ENCODE measurements at regions of chr4 and their contacts with region 1.

Region 1: GRCh38 chr4:112031712-112032328 is 113.4 kb upstream of the FAM241A start:
- DNase-seq: no peak
- ATAC-seq: peak; percentile 67 to 72
- H3K4me3 ChIP-seq: no peak overlapping the region
- H3K27ac ChIP-seq: no peak overlapping the region
- H3K4me1 ChIP-seq: no peaks in the 10 kb centered on the region
- H3K27me3 ChIP-seq: no peaks in the 10 kb centered on the region

Region 2: DNA sequence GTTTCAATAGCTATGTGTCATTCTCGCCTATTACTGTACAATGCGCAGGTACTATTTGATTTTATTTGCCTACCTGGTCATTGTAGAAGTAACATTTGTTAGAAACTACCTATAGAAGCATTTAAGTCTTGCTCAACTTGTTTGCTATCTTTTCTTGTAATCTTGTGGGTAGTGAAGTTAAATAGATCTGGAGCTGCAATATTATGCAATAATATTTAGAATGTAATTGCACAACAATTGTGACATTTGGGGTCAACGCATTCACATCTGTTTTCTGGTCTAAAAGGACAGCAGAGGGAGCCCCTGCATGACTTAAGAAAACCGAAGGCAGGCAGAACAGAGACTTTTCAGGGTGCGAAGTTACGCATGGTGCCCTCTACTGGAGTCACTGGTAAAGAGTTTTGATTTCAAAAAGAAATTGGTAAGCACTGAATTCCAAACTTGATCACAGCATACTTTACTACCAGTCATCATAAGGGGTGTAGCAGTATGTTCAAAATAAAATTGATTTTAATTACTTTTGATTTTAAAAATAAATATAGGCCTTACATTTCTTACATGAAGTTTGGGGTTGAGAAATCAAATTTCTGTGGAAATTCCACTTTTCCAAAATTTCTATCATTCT is 389.8 kb before region 1 on chr4:
- intact Hi-C with region 1: loop called (anchors 5 to 10 kb)
- DNase-seq: peak; percentile 39 to 45 (median 44)
- ATAC-seq: peak; percentile 85
- H3K4me3 ChIP-seq: no peak overlapping the region
- H3K27ac ChIP-seq: no peak overlapping the region
- H3K4me1 ChIP-seq: no peaks in the 10 kb centered on the region
- H3K27me3 ChIP-seq: no peaks in the 10 kb centered on the region

Region 3: GRCh38 chr4:111798840-111799239 is 233.0 kb before region 1 on chr4:
- intact Hi-C with region 1: no loop called
- DNase-seq: no peak
- ATAC-seq: no peak
- H3K4me3 ChIP-seq: no peak overlapping the region
- H3K27ac ChIP-seq: no peak overlapping the region
- H3K4me1 ChIP-seq: no peaks in the 10 kb centered on the region
- H3K27me3 ChIP-seq: no peaks in the 10 kb centered on the region

Region 4: DNA sequence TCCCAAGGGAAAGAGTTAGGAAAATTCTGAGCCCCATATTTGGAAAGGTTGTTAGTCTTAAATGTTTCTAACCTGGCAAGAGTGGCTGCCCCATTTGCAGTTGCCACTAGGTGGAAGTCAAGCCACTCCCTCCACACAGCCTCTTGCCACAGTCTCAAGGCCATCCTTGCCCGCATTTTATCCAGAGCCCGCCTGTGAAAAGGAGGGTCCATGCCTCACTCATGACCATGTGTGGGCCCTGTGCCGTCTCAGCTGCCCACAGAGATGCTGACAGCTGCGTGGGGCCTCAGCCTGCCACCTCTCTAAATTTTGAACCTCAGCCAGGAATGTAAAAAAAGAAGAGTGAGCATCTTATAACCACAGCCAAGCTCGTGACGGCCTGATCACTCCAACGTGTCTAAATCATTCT is 88.0 kb before region 1 on chr4:
- intact Hi-C with region 1: loop called in 1 of 4 experiments (anchors 10 kb)
- DNase-seq: peak; percentile 37 to 74 (median 62)
- ATAC-seq: peak; percentile 83 to 93
- H3K4me3 ChIP-seq: no peak overlapping the region
- H3K27ac ChIP-seq: no peak overlapping the region
- H3K4me1 ChIP-seq: no peaks in the 10 kb centered on the region
- H3K27me3 ChIP-seq: no peaks in the 10 kb centered on the region

Measured in right cardiac atrium (tissue), 5 donors.